ENCODE measurements at regions of chr3 and their contacts with region 1.

Region 1: GRCh38 chr3:4776980-4777581 is 202.2 kb upstream of the BHLHE40 start:
- DNase-seq: peak; percentile 42
- H3K4me3 Mint-ChIP-seq: peak overlapping the region; percentile 33
- H3K27ac Mint-ChIP-seq: peak overlapping the region; percentile 89
- H3K4me1 Mint-ChIP-seq: peaks cover 34% of the 10 kb centered on the region
- H3K27me3 Mint-ChIP-seq: no peaks in the 10 kb centered on the region

Region 2: DNA sequence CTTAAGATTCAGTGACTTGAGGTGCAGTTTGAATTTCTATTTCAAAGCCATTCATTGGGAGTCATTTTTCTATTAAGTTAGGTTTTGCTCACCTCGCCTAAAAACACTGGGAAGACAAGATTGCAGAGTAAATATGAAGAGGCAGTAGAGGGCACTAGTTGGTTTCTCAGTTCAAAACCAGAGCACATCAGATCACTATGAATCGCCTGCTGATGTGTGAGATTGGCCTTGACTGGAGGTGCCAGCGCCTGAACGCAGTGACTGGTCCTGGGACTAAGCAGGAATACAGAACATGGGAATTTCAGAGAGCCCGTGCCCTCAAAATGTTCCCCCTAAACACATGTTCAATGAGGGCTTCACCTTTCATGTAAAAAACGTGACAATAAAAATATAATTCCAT is 55.0 kb before region 1 on chr3:
- CTCF ChIA-PET with region 1: interaction called, 3 read pairs
- intact Hi-C with region 1: loop called (anchors 2 kb)
- DNase-seq: peak; percentile 53
- H3K4me3 Mint-ChIP-seq: no peak overlapping the region
- H3K27ac Mint-ChIP-seq: peak overlapping the region; percentile 30
- H3K4me1 Mint-ChIP-seq: peaks cover 6% of the 10 kb centered on the region
- H3K27me3 Mint-ChIP-seq: no peaks in the 10 kb centered on the region

Region 3: DNA sequence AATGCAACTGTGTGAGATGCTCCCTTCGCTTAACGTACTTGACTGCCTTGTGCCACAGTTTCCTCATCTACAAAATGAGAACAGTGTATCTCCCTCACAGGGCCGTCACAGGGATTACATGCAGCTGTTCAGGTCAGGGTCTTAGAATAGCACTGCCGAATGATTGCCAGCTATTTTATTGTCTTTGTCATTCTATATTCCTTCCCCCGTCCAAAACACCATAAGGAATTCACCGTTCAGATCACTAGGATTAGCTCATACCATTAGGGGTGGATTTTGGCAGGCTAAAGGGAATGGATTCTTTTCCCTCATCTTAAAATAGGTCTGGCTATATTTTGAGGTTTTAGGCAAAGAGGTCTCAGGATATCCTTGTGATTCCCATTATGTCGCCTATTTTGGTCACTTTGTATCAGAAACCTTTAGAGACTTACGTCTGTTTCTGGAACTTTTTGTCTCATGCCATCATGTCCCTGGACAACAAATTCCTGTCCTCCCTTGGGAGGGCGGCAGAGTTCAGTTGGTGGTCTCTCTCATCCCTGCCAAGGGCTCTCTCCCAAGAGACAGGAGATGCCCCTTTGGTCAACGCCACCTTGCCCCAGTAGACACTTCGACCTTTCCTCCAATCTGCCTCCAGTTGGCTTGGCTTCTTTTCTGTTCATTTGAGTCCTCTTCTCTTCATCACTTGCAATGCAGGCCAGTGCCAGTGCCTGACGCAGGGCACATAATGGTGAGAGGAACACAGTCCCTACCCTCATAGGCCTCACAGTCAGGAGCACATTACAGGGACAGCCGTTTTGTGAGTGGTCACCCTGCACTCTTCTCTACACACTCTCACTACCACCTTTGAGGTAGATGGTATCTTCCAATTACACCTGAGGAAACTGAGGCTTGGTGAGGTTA is 30.6 kb after region 1 on chr3:
- CTCF ChIA-PET with region 1: interaction called, 3 read pairs
- intact Hi-C with region 1: loop called (anchors 1 kb)
- DNase-seq: no peak
- H3K4me3 Mint-ChIP-seq: no peak overlapping the region
- H3K27ac Mint-ChIP-seq: no peak overlapping the region
- H3K4me1 Mint-ChIP-seq: peaks cover 28% of the 10 kb centered on the region
- H3K27me3 Mint-ChIP-seq: no peaks in the 10 kb centered on the region

Region 4: GRCh38 chr3:4834403-4834866 is 57.4 kb after region 1 on chr3:
- CTCF ChIA-PET with region 1: interaction called, 3 read pairs
- intact Hi-C with region 1: loop called (anchors 1 kb)
- DNase-seq: peak; percentile 84
- H3K4me3 Mint-ChIP-seq: peak overlapping the region; percentile 13
- H3K27ac Mint-ChIP-seq: peak overlapping the region; percentile 93
- H3K4me1 Mint-ChIP-seq: peaks cover 85% of the 10 kb centered on the region
- H3K27me3 Mint-ChIP-seq: no peaks in the 10 kb centered on the region

Region 5: DNA sequence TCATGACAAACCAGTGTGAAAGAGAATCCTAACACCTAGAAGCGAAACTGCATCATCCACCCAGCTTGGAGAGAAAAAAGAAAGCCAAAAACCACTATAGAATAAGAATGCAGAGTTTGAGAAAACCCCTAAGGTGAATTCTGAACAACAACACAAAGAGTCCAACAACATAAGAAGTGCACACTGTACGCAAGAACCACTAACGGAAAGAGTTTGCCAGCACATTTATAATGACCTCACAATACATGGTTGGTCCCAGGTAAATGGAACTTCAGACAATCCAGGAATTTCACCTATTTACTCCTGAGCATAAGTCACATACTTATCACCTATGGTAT is 73.8 kb after region 1 on chr3:
- CTCF ChIA-PET with region 1: interaction called, 4 read pairs
- intact Hi-C with region 1: loop called (anchors 1 kb)
- DNase-seq: peak; percentile 64
- H3K4me3 Mint-ChIP-seq: peak overlapping the region; percentile 38
- H3K27ac Mint-ChIP-seq: peak overlapping the region; percentile 94
- H3K4me1 Mint-ChIP-seq: peaks cover 84% of the 10 kb centered on the region
- H3K27me3 Mint-ChIP-seq: no peaks in the 10 kb centered on the region

Region 6: GRCh38 chr3:4906107-4906621 is 129.1 kb after region 1 on chr3:
- CTCF ChIA-PET with region 1: no interaction called
- intact Hi-C with region 1: loop called (anchors 2 kb)
- DNase-seq: peak; percentile 61
- H3K4me3 Mint-ChIP-seq: no peak overlapping the region
- H3K27ac Mint-ChIP-seq: no peak overlapping the region
- H3K4me1 Mint-ChIP-seq: peaks cover 72% of the 10 kb centered on the region
- H3K27me3 Mint-ChIP-seq: no peaks in the 10 kb centered on the region

Region 7: GRCh38 chr3:5057857-5058324 is 280.8 kb after region 1 on chr3:
- CTCF ChIA-PET with region 1: no interaction called
- intact Hi-C with region 1: loop called (anchors 2 kb)
- DNase-seq: peak; percentile 91
- H3K4me3 Mint-ChIP-seq: no peak overlapping the region
- H3K27ac Mint-ChIP-seq: no peak overlapping the region
- H3K4me1 Mint-ChIP-seq: peaks cover 5% of the 10 kb centered on the region
- H3K27me3 Mint-ChIP-seq: no peaks in the 10 kb centered on the region

Measured in activated naive CD4-positive, alpha-beta T cell treated with anti-CD3 and anti-CD28 coated beads for 36 hours (primary cell).